ENCODE measurements at regions of chr16 and their contacts with region 1.

Region 1: DNA sequence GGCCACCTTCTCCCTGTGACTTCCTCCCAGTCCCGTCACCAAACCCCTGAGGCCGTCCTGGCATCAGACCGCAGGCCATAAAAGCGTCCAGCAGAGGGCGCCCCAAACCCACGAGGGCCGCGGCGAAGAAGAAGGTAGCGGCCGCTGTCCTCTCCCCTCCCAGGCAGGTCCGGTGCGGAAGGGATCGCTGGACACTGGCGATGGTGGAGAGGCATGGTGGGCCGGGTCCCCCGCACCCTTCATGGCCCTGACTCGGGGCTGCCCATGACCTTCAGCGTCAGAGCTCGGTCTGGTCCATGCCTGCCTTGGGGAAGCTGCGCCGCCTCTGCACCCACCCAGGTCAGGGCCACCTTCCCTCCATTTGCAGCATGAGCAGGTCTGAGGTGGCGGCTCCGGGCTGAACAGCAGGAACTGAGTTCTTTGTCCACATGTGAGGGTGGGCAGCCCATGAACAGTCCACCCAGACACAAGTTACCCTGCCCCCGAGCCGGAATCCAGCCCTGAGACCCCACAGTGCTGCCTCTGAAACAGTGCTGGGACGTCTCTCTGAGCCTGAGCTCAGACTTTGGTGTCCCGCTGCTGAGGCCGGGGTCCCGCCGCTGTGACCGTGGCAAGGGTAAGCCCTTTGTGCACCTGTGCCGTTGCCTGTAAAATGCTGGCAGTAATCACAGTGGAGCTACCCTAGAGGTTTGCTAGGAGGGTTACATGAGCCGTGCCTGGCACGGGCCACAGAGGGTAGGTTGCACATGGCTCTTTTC is 40.8 kb upstream of the CMIP start:
- DNase-seq: peak; percentile 80 to 94
- H3K4me3 ChIP-seq: no peak overlapping the region; the same call in 1 of the 2 replicates
- H3K27ac ChIP-seq: no peak overlapping the region
- H3K4me1 ChIP-seq: peaks cover 50% of the 10 kb centered on the region
- H3K27me3 ChIP-seq: no peaks in the 10 kb centered on the region
- CTCF ChIP-seq: peak; percentile 91

Region 2: DNA sequence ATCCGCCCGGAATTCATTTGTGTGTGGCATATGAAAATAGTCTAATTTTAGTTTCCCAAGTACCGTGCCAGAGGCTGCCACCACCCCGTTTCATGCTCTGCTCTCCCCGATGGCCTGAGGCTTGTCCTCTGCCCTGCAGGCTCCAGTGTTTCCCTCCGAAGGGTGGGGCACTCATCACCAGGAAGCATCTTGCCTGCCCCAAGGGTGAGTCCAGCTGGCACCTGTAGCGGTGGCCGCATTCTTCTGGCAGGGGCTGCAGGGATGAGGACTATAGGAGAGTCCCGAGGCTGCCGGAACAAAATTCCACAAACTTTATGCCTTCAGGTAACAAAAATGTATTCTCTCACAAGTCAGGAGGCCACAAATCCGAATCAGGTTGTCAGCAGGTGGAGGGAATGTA is 17.8 kb after region 1 on chr16:
- CTCF ChIA-PET with region 1: no interaction called
- POLR2A ChIA-PET with region 1: no interaction called
- intact Hi-C with region 1: loop called (anchors 1 kb)
- DNase-seq: peak; percentile 93 to 94
- H3K4me3 ChIP-seq: no peak overlapping the region
- H3K27ac ChIP-seq: peak overlapping the region; percentile 71
- H3K4me1 ChIP-seq: peaks cover 17% of the 10 kb centered on the region
- H3K27me3 ChIP-seq: no peaks in the 10 kb centered on the region
- CTCF ChIP-seq: no peak

Region 3: GRCh38 chr16:81444448-81445121 is 40.8 kb after region 1 on chr16 and contains the start of gene CMIP:
- CTCF ChIA-PET with region 1: no interaction called
- POLR2A ChIA-PET with region 1: no interaction called
- intact Hi-C with region 1: loop called (anchors 1 kb)
- DNase-seq: peak in 1 of 2 experiments; percentile 86
- H3K4me3 ChIP-seq: peak within 1 kb of the TSS; percentile 92
- H3K27ac ChIP-seq: peak within 1 kb of the TSS; percentile 81
- H3K4me1 ChIP-seq: peaks cover 24% of the 10 kb centered on the region
- H3K27me3 ChIP-seq: no peaks in the 10 kb centered on the region
- CTCF ChIP-seq: no peak
- total RNA-seq, gene CMIP: 92.1 and 96.6 TPM in 2 replicates

Region 4: GRCh38 chr16:81523387-81524115 is 119.8 kb after region 1 on chr16:
- CTCF ChIA-PET with region 1: no interaction called
- POLR2A ChIA-PET with region 1: interaction called, 4 read pairs
- intact Hi-C with region 1: loop called (anchors 2 kb)
- DNase-seq: peak; percentile 91 to 92
- H3K4me3 ChIP-seq: 0 out of 2 replicates have a peak overlapping the region, but pooled peaks have one; percentile 1
- H3K27ac ChIP-seq: peak overlapping the region; percentile 73
- H3K4me1 ChIP-seq: peaks cover 71% of the 10 kb centered on the region
- H3K27me3 ChIP-seq: no peaks in the 10 kb centered on the region
- CTCF ChIP-seq: no peak

Region 5: GRCh38 chr16:81585785-81586184 is 182.0 kb after region 1 on chr16:
- CTCF ChIA-PET with region 1: no interaction called
- POLR2A ChIA-PET with region 1: interaction called, 5 read pairs
- intact Hi-C with region 1: loop called (anchors 1 kb)
- DNase-seq: peak in 1 of 2 experiments; percentile 32
- H3K4me3 ChIP-seq: no peak overlapping the region
- H3K27ac ChIP-seq: peak overlapping the region; percentile 68
- H3K4me1 ChIP-seq: peaks cover 62% of the 10 kb centered on the region
- H3K27me3 ChIP-seq: no peaks in the 10 kb centered on the region
- CTCF ChIP-seq: peak; percentile 52

Region 6: DNA sequence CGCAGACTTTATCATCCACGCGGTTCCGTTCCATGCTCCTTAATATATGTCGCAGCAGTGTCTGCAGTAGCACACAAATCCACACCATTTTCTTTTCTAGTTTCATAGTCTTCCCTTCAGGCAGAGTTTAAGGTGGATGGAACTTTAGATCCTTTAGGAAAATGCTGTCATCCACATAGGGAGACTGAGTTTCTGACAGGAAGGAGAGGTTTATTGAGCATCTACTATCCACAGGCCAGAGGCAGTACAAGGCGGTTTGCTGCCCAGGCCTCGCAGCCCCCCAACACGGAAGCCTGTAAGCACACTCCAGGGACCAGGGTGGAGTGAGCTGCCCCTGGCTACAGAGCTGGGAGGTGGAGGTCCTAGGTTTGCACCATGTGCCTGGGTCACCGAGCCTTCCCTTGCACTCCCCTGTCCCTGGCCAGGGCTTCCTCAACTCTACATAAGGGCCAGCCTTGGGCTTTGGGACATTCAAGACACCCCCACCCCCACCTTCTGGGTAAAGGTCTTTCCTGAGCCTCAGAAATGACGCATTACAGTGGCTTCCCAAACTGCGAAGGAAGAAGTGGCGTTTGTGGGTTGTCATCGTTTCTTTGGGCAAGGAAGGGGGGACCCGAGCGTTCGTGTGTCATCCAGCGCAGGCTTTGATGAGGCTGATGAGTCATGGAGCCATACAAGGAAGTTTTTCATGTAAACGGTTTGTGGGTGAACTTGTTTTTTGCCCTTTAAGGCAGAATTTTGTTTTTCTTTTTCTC is 228.8 kb after region 1 on chr16:
- CTCF ChIA-PET with region 1: no interaction called
- POLR2A ChIA-PET with region 1: interaction called, 4 read pairs
- intact Hi-C with region 1: loop called (anchors 1 kb)
- DNase-seq: peak; percentile 79 to 95
- H3K4me3 ChIP-seq: peak overlapping the region; percentile 36; the same call in 1 of the 2 replicates
- H3K27ac ChIP-seq: peak overlapping the region; percentile 90
- H3K4me1 ChIP-seq: peaks cover 49% of the 10 kb centered on the region
- H3K27me3 ChIP-seq: no peaks in the 10 kb centered on the region
- CTCF ChIP-seq: no peak

Region 7: GRCh38 chr16:81696961-81697615 is 293.3 kb after region 1 on chr16:
- CTCF ChIA-PET with region 1: interaction called, 4 read pairs
- POLR2A ChIA-PET with region 1: no interaction called
- intact Hi-C with region 1: loop called (anchors 5 kb)
- DNase-seq: peak; percentile 46 to 58
- H3K4me3 ChIP-seq: no peak overlapping the region
- H3K27ac ChIP-seq: no peak overlapping the region
- H3K4me1 ChIP-seq: no peaks in the 10 kb centered on the region
- H3K27me3 ChIP-seq: no peaks in the 10 kb centered on the region
- CTCF ChIP-seq: peak; percentile 72